ENCODE measurements at regions of chr13 and their contacts with region 1.

Region 1: DNA sequence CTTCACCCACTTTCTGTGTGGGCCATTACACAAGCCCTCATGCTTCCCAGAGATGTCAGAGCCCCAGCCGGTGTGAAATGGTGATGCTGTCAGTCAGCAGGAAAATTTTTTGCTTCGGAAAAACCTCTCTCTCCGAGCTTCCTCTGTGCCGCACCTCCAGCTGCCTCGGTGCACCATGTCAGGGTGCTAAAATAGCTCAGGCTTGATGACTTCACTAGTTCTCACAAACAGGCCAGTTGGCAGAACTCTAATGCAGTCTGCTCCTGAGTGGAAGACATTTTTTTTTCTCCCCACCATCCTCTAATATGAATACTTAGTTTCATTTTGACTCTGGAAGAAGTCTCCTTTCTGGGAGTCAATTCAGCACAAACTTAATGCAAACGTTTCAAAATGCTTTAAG is 71.3 kb downstream of the KLF12 start:
- DNase-seq: no peak
- H3K4me3 Mint-ChIP-seq: peak overlapping the region; percentile 79
- H3K27ac Mint-ChIP-seq: peak overlapping the region; percentile 93
- H3K4me1 Mint-ChIP-seq: peaks cover 64% of the 10 kb centered on the region
- H3K27me3 Mint-ChIP-seq: no peaks in the 10 kb centered on the region

Region 2: GRCh38 chr13:73924607-73925006 is 138.3 kb before region 1 on chr13:
- intact Hi-C with region 1: loop called (anchors 5 kb)
- DNase-seq: no peak
- H3K4me3 Mint-ChIP-seq: no peak overlapping the region
- H3K27ac Mint-ChIP-seq: peak overlapping the region; percentile 72
- H3K4me1 Mint-ChIP-seq: peaks cover 58% of the 10 kb centered on the region
- H3K27me3 Mint-ChIP-seq: no peaks in the 10 kb centered on the region

Region 3: GRCh38 chr13:73984949-73985691 is 77.8 kb before region 1 on chr13:
- intact Hi-C with region 1: loop called (anchors 2 kb)
- DNase-seq: peak; percentile 30
- H3K4me3 Mint-ChIP-seq: peak overlapping the region; percentile 65
- H3K27ac Mint-ChIP-seq: peak overlapping the region; percentile 80
- H3K4me1 Mint-ChIP-seq: peaks cover 33% of the 10 kb centered on the region
- H3K27me3 Mint-ChIP-seq: no peaks in the 10 kb centered on the region

Region 4: GRCh38 chr13:74026753-74027152 is 36.2 kb before region 1 on chr13:
- intact Hi-C with region 1: loop called (anchors 5 kb)
- DNase-seq: peak; percentile 44
- H3K4me3 Mint-ChIP-seq: peak overlapping the region; percentile 48
- H3K27ac Mint-ChIP-seq: peak overlapping the region; percentile 58
- H3K4me1 Mint-ChIP-seq: peaks cover 38% of the 10 kb centered on the region
- H3K27me3 Mint-ChIP-seq: no peaks in the 10 kb centered on the region

Region 5: DNA sequence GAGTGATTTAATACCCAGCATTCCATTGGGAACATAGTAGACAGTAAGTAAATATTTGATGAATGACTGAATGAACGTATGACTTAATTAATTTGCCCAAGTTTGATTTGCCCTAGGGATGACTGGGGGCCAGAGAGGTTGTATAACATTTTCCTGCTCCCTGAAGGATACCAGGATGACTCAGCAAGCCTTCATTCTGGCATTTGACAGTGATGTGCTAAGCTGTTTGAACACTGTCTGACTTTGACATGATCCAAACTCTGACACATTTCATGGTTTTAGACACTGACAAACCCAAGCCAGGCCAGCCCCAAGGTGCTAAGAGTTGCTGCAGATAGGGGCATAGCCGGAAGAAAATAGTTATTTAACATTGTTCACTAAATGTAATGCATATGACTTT is 124.6 kb after region 1 on chr13:
- intact Hi-C with region 1: no loop called
- DNase-seq: no peak
- H3K4me3 Mint-ChIP-seq: no peak overlapping the region
- H3K27ac Mint-ChIP-seq: no peak overlapping the region
- H3K4me1 Mint-ChIP-seq: peaks cover 9% of the 10 kb centered on the region
- H3K27me3 Mint-ChIP-seq: peaks cover 5% of the 10 kb centered on the region

Region 6: DNA sequence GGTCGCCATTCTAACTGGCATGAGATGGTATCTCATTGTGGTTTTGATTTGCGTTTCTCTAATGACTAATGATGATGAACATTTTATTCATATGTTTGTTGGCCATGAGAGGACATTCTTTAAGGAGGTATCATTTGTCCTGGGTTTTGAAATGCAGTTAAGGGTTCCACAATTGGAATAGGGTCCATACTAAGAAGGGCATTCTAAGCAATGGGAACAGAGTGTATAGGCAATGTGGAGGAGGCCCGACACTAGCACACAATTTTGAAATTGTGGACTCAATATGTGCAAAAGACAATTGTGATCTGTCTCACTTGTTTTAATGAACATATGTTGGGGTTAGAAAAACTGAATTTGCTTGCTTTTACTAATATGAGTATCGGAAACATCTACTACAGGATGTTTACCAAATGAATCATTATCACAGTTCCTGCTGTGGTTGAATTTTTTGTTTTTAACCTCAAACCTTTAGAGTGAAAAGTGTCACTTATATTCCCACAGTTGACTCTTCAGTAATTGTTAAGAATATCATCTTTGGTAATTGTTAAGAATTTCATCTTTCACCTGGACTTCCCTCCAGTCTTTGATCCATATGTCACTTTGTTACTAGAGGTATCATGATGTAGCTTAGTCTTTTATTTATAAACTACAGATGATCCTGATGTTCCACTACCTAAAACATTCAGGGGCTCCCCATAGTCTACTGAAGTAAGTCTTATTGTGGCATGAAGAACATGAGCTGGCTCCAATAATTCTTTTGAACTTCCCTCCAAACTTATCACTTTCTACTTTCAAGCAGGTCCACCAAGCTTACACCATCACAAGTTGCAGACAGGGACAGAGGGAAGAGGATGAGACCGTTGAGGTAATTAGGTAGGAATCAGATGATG is 180.9 kb after region 1 on chr13:
- intact Hi-C with region 1: loop called (anchors 5 kb)
- DNase-seq: no peak
- H3K4me3 Mint-ChIP-seq: peak overlapping the region; percentile 11
- H3K27ac Mint-ChIP-seq: peak overlapping the region; percentile 73
- H3K4me1 Mint-ChIP-seq: peaks cover 46% of the 10 kb centered on the region
- H3K27me3 Mint-ChIP-seq: peaks cover 15% of the 10 kb centered on the region

Region 7: GRCh38 chr13:74287724-74288169 is 224.8 kb after region 1 on chr13:
- intact Hi-C with region 1: loop called (anchors 5 kb)
- DNase-seq: peak; percentile 71
- H3K4me3 Mint-ChIP-seq: peak overlapping the region; percentile 15
- H3K27ac Mint-ChIP-seq: peak overlapping the region; percentile 33
- H3K4me1 Mint-ChIP-seq: peaks cover 33% of the 10 kb centered on the region
- H3K27me3 Mint-ChIP-seq: peaks cover 20% of the 10 kb centered on the region